ENCODE measurements at regions of chr6 and their contacts with region 1.

Region 1: GRCh38 chr6:80004173-80005072 is at the start of gene TTK:
- DNase-seq: peak; percentile 91 to 95 (median 94)
- ATAC-seq: peak; percentile 99 to 100 (median 100)
- H3K4me3 ChIP-seq: peak within 1 kb of the TSS; percentile 49 to 83 (median 69)
- H3K27ac ChIP-seq: peak within 1 kb of the TSS in 11 of 12 donors; percentile 67 to 89 (median 85)
- H3K4me1 ChIP-seq: peaks cover 0 to 16% (median 9%) of the 10 kb centered on the region in 12 donors
- H3K27me3 ChIP-seq: no peaks in the 10 kb centered on the region
- CTCF ChIP-seq: no peak
- POLR2A ChIP-seq: peak in 1 of 2 donors; percentile 69
- total RNA-seq, gene TTK: 0.12 to 2.9 (median 0.48) TPM in 7 of 9 donors, not detected in the others

Region 2: GRCh38 chr6:80060774-80061173 is 56.4 kb after region 1 on chr6:
- intact Hi-C with region 1: no loop called
- DNase-seq: no peak
- ATAC-seq: no peak
- H3K4me3 ChIP-seq: no peak overlapping the region
- H3K27ac ChIP-seq: no peak overlapping the region
- H3K4me1 ChIP-seq: no peaks in the 10 kb centered on the region
- H3K27me3 ChIP-seq: no peaks in the 10 kb centered on the region
- CTCF ChIP-seq: no peak
- POLR2A ChIP-seq: no peak

Region 3: DNA sequence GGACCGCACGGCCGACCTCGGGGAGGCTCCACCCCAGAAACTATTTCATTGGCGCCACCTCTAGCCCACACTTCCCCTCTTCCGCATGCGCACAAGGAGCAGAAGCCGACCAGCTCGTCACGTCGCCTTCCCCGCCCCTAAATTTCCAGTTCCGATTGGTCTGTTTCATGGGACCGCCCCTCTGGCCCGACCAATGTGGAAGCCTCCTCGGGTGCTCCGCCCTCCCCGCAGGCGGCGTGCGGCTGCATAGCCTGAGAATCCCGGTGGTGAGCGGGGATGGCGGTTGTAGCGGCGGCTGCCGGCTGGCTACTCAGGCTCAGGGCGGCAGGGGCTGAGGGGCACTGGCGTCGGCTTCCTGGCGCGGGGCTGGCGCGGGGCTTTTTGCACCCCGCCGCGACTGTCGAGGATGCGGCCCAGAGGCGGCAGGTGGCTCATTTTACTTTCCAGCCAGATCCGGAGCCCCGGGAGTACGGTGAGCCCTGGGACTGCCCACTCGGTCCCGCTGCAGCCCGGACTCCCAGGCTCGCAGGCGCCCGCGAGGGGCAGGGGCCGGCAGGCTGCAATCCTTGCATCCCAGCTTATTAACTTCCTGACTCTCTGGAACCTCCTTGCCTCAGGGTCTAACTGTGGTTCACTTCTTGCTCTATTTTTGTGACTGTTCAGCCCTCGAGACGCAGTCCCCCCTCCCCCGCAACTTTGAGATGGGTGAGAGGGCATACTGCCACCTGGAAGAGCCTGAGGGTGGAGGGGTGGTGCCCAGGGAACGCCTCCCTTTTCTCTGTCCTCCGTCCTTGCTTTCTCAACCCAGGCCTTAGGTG is 102.2 kb after region 1 on chr6 and contains the start of gene BCKDHB:
- intact Hi-C with region 1: loop called in 6 of 10 experiments (anchors 1 to 10 kb)
- DNase-seq: peak; percentile 97 to 99 (median 99)
- ATAC-seq: peak; percentile 99 to 100 (median 100)
- H3K4me3 ChIP-seq: peak within 1 kb of the TSS; percentile 45 to 96 (median 84)
- H3K27ac ChIP-seq: peak within 1 kb of the TSS; percentile 43 to 95 (median 82)
- H3K4me1 ChIP-seq: peaks cover 0 to 25% (median 7%) of the 10 kb centered on the region in 12 donors
- H3K27me3 ChIP-seq: no peaks in the 10 kb centered on the region
- CTCF ChIP-seq: peak in 2 of 12 donors; percentile 3 to 14
- POLR2A ChIP-seq: peak; percentile 29 to 95
- total RNA-seq, gene BCKDHB: 17.3 to 41.9 (median 31.0) TPM

Measured in heart left ventricle (tissue), 16 donors.